HCT116 (cell line): ENCODE measurements at regions of chr6 and their contacts with region 1.

Region 1: DNA sequence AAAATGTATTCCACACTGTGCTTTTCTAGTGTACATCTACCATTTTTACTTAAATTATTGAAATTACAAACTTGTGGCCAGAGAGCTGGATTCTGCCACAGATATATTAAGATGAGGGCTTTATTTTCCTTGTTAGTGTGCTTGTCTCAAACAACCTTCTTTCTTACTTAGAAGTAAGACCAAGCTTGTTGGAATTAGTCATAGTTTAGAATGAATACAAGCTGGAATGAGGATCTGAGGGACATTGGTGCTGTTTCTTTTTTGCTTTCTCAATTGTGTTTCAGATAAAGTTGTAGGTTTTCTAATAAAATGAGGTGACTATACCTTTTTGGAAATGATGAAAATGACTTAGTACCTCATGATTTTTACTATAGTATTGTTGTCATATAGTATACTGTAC is 40.3 kb downstream of the UBR2 start:
- DNase-seq: no peak
- ATAC-seq: no peak
- H3K4me3 ChIP-seq: no peak overlapping the region
- H3K27ac ChIP-seq: no peak overlapping the region
- H3K4me1 ChIP-seq: no peaks in the 10 kb centered on the region
- H3K27me3 ChIP-seq: no peaks in the 10 kb centered on the region
- CTCF ChIP-seq: no peak
- POLR2A ChIP-seq: no peak
- RAD21 ChIP-seq: no peak

Region 2: GRCh38 chr6:42251911-42252637 is 352.1 kb before region 1 on chr6:
- CTCF ChIA-PET with region 1: no interaction called
- POLR2A ChIA-PET with region 1: no interaction called
- RAD21 ChIA-PET with region 1: no interaction called
- intact Hi-C with region 1: no loop called
- DNase-seq: no peak
- ATAC-seq: no peak
- H3K4me3 ChIP-seq: no peak overlapping the region
- H3K27ac ChIP-seq: no peak overlapping the region; the same call in 1 of the 2 replicates
- H3K4me1 ChIP-seq: peaks cover 7 to 8% of the 10 kb centered on the region in 2 experiments; a peak in 3 of 4 replicates
- H3K27me3 ChIP-seq: no peaks in the 10 kb centered on the region
- CTCF ChIP-seq: no peak
- POLR2A ChIP-seq: no peak
- RAD21 ChIP-seq: no peak

Region 3: GRCh38 chr6:42652024-42652746 is 48.0 kb after region 1 on chr6:
- CTCF ChIA-PET with region 1: no interaction called
- POLR2A ChIA-PET with region 1: no interaction called
- RAD21 ChIA-PET with region 1: no interaction called
- intact Hi-C with region 1: loop called (anchors 10 kb)
- DNase-seq: no peak
- ATAC-seq: no peak
- H3K4me3 ChIP-seq: no peak overlapping the region
- H3K27ac ChIP-seq: no peak overlapping the region
- H3K4me1 ChIP-seq: peaks cover 0 to 9% of the 10 kb centered on the region in 2 experiments; a peak in 2 of 4 replicates
- H3K27me3 ChIP-seq: no peaks in the 10 kb centered on the region
- CTCF ChIP-seq: no peak
- POLR2A ChIP-seq: no peak
- RAD21 ChIP-seq: no peak

Region 4: DNA sequence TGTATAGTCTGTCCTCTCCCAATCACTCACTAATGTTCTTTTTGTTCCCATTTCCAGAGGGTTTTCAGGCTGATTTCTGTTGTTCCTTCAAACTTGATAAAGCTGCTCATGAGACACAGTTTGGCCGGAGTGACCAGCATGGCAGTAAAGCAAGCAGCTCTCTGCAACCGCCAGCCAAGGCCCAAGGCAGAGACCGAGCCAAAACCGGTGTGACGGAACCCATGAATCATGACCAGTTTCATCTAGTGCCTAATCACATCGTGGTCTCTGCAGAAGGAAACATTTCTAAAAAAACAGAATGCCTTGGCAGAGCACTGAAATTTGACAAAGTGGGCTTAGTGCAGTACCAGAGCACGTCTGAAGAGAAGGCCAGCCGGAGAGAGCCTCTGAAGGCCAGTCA is 260.5 kb after region 1 on chr6:
- CTCF ChIA-PET with region 1: no interaction called
- POLR2A ChIA-PET with region 1: no interaction called
- RAD21 ChIA-PET with region 1: no interaction called
- intact Hi-C with region 1: no loop called
- DNase-seq: no peak
- ATAC-seq: no peak
- H3K4me3 ChIP-seq: no peak overlapping the region
- H3K27ac ChIP-seq: no peak overlapping the region
- H3K4me1 ChIP-seq: no peaks in the 10 kb centered on the region
- H3K27me3 ChIP-seq: no peaks in the 10 kb centered on the region
- CTCF ChIP-seq: no peak
- POLR2A ChIP-seq: no peak
- RAD21 ChIP-seq: no peak